ENCODE measurements at regions of chr17 and their contacts with region 1.

Region 1: GRCh38 chr17:38667099-38667786 is 7.5 kb downstream of the EPOP start:
- DNase-seq: peak in 7 of 9 experiments; percentile 27 to 72 (median 61)
- ATAC-seq: peak; percentile 70
- H3K4me3 ChIP-seq: no peak overlapping the region
- H3K4me3 Mint-ChIP-seq: no peak overlapping the region
- H3K27ac ChIP-seq: no peak overlapping the region
- H3K27ac Mint-ChIP-seq: no peak overlapping the region
- H3K4me1 ChIP-seq: no peaks in the 10 kb centered on the region
- H3K4me1 Mint-ChIP-seq: peaks cover 6% of the 10 kb centered on the region
- H3K27me3 ChIP-seq: peaks cover 2 to 12% of the 10 kb centered on the region in 2 experiments
- H3K27me3 Mint-ChIP-seq: peaks cover 61% of the 10 kb centered on the region
- CTCF ChIP-seq: peak; percentile 92

Region 2: DNA sequence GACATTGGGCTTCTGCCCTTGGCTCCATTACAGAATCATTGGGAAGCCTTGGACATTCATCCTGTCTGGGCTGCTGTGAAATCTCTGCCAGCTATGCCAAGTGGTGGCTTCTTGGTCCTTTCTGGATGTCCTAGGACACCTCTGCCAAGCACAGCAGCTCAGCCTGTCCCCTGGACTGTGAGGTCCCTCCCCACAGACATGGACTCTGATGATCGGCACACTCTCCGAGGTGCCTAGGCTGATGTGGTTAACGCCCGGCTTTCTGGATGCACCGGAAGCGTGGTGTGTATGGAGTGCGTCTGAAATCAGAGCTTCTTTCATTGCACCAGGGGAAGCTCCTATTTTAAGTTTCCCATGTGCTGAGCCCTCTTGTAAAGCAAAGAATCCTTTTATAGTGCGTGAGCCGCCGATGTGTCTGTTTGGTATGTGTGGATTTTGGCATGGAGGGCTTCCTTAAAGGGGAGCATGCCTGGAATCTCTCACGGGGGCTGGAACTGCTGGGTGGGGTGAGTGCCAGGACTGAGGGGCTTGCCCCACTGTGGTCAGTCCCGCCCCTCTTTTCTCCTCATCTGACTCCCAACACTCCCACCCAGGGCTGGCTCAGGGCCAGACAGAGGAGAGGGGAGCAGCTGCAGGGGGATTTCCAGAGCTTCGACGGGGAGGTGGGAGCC is 245.9 kb before region 1 on chr17:
- CTCF ChIA-PET with region 1: interaction called, 13 read pairs
- POLR2A ChIA-PET with region 1: no interaction called
- intact Hi-C with region 1: no loop called
- DNase-seq: no peak
- ATAC-seq: no peak
- H3K4me3 ChIP-seq: no peak overlapping the region
- H3K4me3 Mint-ChIP-seq: no peak overlapping the region
- H3K27ac ChIP-seq: no peak overlapping the region
- H3K27ac Mint-ChIP-seq: no peak overlapping the region
- H3K4me1 ChIP-seq: no peaks in the 10 kb centered on the region
- H3K4me1 Mint-ChIP-seq: peaks cover 3% of the 10 kb centered on the region
- H3K27me3 ChIP-seq: peaks cover 17 to 22% of the 10 kb centered on the region in 2 experiments
- H3K27me3 Mint-ChIP-seq: peaks cover 56% of the 10 kb centered on the region
- CTCF ChIP-seq: no peak

Region 3: GRCh38 chr17:38464723-38465390 is 202.4 kb before region 1 on chr17:
- CTCF ChIA-PET with region 1: no interaction called
- POLR2A ChIA-PET with region 1: no interaction called
- intact Hi-C with region 1: no loop called
- DNase-seq: no peak
- ATAC-seq: no peak
- H3K4me3 ChIP-seq: no peak overlapping the region
- H3K4me3 Mint-ChIP-seq: no peak overlapping the region
- H3K27ac ChIP-seq: no peak overlapping the region
- H3K27ac Mint-ChIP-seq: no peak overlapping the region
- H3K4me1 ChIP-seq: no peaks in the 10 kb centered on the region
- H3K4me1 Mint-ChIP-seq: no peaks in the 10 kb centered on the region
- H3K27me3 ChIP-seq: no peaks in the 10 kb centered on the region
- H3K27me3 Mint-ChIP-seq: peaks cover 6% of the 10 kb centered on the region
- CTCF ChIP-seq: no peak

Region 4: GRCh38 chr17:38485146-38485468 is 182.1 kb before region 1 on chr17:
- CTCF ChIA-PET with region 1: interaction called, 20 read pairs
- POLR2A ChIA-PET with region 1: no interaction called
- intact Hi-C with region 1: no loop called
- DNase-seq: no peak
- ATAC-seq: no peak
- H3K4me3 ChIP-seq: no peak overlapping the region
- H3K4me3 Mint-ChIP-seq: no peak overlapping the region
- H3K27ac ChIP-seq: no peak overlapping the region
- H3K27ac Mint-ChIP-seq: no peak overlapping the region
- H3K4me1 ChIP-seq: no peaks in the 10 kb centered on the region
- H3K4me1 Mint-ChIP-seq: peaks cover 6% of the 10 kb centered on the region
- H3K27me3 ChIP-seq: no peaks in the 10 kb centered on the region
- H3K27me3 Mint-ChIP-seq: peaks cover 7% of the 10 kb centered on the region
- CTCF ChIP-seq: no peak

Region 5: DNA sequence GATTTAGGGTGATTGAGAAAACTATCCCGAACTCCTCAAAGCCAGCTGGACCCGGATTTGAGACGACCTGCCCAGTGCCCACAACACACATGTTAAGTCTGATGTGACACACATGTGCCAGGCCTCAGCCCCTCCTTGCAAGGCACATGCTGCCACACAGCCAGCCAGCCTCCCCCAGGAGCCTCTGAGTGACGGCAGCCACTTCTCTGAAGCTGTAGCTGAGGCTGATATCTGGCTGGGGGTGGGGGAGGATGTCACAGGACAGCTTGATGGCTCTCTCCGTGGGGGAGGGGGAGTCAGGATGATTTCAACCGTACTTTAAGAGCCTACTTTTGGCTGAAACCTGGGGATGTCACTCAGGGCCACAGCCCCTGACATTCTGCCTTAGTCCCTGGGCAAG is 102.4 kb before region 1 on chr17:
- CTCF ChIA-PET with region 1: interaction called, 67 read pairs
- POLR2A ChIA-PET with region 1: no interaction called
- intact Hi-C with region 1: no loop called
- DNase-seq: no peak
- ATAC-seq: no peak
- H3K4me3 ChIP-seq: no peak overlapping the region
- H3K4me3 Mint-ChIP-seq: no peak overlapping the region
- H3K27ac ChIP-seq: no peak overlapping the region
- H3K27ac Mint-ChIP-seq: no peak overlapping the region
- H3K4me1 ChIP-seq: peaks cover 32% of the 10 kb centered on the region
- H3K4me1 Mint-ChIP-seq: peaks cover 20% of the 10 kb centered on the region
- H3K27me3 ChIP-seq: peaks cover 60 to 64% of the 10 kb centered on the region in 2 experiments
- H3K27me3 Mint-ChIP-seq: peaks cover 73% of the 10 kb centered on the region
- CTCF ChIP-seq: no peak

Region 6: DNA sequence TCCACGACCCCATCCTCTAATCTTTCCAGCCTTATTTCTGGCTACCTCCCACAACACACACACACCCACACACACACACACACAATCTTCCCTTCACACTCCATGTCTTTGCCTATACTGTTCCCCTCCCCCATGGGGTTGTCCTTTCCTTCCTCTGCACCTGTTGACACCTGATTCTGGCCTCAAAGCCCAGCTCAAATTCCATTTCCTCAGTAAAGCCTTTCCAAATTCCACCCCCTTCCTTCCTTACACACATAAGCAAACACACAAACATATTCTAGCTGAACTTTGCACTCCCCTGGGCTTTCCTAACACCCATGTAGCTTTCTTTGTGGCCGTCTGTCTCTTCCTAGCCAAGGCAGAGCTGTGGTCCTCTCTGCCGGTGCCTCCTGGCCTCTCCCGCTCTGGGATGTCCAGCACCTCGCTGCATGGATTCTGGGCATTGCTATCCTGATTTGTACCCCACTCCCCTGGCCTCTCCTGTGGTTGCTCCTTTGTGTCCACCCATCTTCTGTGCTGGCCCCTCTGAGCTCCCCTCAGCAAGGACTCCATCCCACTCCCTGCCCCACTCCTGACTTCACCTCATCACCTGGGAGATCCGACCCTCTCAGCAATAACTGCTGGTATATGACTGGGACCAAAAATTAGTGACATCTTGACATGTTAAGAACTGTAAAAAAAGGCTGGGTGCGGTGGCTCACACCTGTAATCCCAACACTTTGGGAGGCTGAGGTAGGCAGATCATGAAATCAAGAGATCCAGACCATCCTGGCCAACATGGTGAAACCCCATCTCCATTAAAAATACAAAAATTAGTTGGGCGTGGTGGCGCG is 53.0 kb before region 1 on chr17:
- CTCF ChIA-PET with region 1: no interaction called
- POLR2A ChIA-PET with region 1: no interaction called
- intact Hi-C with region 1: loop called (anchors 2 to 10 kb)
- DNase-seq: no peak
- ATAC-seq: no peak
- H3K4me3 ChIP-seq: no peak overlapping the region
- H3K4me3 Mint-ChIP-seq: no peak overlapping the region
- H3K27ac ChIP-seq: no peak overlapping the region
- H3K27ac Mint-ChIP-seq: no peak overlapping the region
- H3K4me1 ChIP-seq: no peaks in the 10 kb centered on the region
- H3K4me1 Mint-ChIP-seq: no peaks in the 10 kb centered on the region
- H3K27me3 ChIP-seq: peaks cover 11 to 19% of the 10 kb centered on the region in 2 experiments
- H3K27me3 Mint-ChIP-seq: peaks cover 31% of the 10 kb centered on the region
- CTCF ChIP-seq: no peak

Region 7: GRCh38 chr17:38742411-38743308 is 75.4 kb after region 1 on chr17:
- CTCF ChIA-PET with region 1: no interaction called
- POLR2A ChIA-PET with region 1: no interaction called
- intact Hi-C with region 1: no loop called
- DNase-seq: no peak
- ATAC-seq: no peak
- H3K4me3 ChIP-seq: no peak overlapping the region
- H3K4me3 Mint-ChIP-seq: no peak overlapping the region
- H3K27ac ChIP-seq: no peak overlapping the region
- H3K27ac Mint-ChIP-seq: no peak overlapping the region
- H3K4me1 ChIP-seq: peaks cover 12% of the 10 kb centered on the region
- H3K4me1 Mint-ChIP-seq: peaks cover 11% of the 10 kb centered on the region
- H3K27me3 ChIP-seq: peaks cover 10 to 19% of the 10 kb centered on the region in 2 experiments
- H3K27me3 Mint-ChIP-seq: peaks cover 28% of the 10 kb centered on the region
- CTCF ChIP-seq: no peak

Measured in CD8-positive, alpha-beta T cell (primary cell).